Endothelial cell of umbilical vein (primary cell): ENCODE measurements at regions of chr15 and their contacts with region 1.

Region 1: GRCh38 chr15:72685925-72686794 is at the starts of genes BBS4 and HIGD2B:
- DNase-seq: peak; percentile 87
- H3K4me3 ChIP-seq: peak within 1 kb of the TSS; percentile 54 to 79 (median 72)
- H3K27ac ChIP-seq: peak within 1 kb of the TSS; percentile 67
- H3K4me1 ChIP-seq: peaks cover 9% of the 10 kb centered on the region
- H3K27me3 ChIP-seq: no peaks in the 10 kb centered on the region
- CTCF ChIP-seq: no peak
- POLR2A ChIP-seq: peak; percentile 62
- total RNA-seq, gene BBS4: 7.5 and 11.3 TPM in 2 replicates
- total RNA-seq, gene HIGD2B: not detected in 2 replicates

Region 2: DNA sequence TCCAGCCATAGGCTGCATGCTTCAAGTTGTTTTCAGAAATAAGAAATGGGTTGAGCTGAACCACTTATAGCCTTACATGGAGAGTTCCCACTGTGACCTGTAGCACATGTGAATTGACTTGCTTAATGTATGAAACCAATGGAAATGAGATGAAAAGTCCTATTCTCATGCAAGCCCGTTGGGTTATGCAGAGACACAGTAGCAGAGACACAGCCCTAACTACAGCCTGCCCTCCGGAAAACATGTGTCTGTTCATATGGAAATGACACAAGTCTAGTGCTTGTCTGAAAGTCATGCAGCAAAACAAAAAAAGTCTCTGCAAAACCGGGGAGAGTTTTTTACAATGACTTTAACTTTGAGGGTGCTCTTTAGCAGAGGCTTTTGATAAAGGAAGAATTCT is 14.6 kb before region 1 on chr15:
- CTCF ChIA-PET with region 1: interaction called, 11 read pairs
- POLR2A ChIA-PET with region 1: no interaction called
- dilution Hi-C with region 1: no loop called
- intact Hi-C with region 1: no loop called
- DNase-seq: no peak
- H3K4me3 ChIP-seq: no peak overlapping the region
- H3K27ac ChIP-seq: no peak overlapping the region
- H3K4me1 ChIP-seq: no peaks in the 10 kb centered on the region
- H3K27me3 ChIP-seq: peaks cover 2 to 14% of the 10 kb centered on the region in 2 experiments
- CTCF ChIP-seq: no peak
- POLR2A ChIP-seq: no peak

Region 3: DNA sequence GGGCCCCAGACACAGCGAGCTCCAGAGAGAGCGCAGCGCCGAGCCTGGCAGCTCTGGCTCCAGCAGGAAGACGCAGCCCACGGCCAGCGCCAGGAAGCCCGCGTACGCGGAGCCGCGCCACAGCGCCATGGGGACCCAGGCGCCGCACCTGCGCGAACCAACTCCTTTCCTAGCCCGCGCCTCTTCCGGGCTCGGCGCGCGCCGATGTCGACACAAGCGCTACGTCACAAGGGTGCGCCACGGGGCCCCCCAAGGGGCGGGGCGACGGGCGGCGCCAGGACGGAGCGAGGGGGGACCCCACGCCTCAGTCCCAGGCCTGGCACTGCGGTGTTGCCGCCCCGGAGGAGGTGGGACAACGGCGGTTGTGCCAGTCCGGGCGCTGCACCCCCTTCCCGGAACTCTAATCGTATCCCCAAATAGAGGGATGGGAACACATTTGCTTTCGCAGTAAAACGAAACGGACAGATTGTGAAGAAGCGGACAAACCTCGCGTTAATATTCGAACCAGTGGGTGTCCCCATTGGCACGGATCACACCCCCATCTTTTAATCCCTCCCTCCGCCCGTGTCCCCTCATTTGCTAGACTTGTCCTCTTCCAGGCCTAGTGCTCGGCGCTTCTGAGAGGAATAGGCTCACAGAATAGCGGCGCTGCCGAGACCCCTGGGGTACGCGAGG is 97.5 kb after region 1 on chr15 and contains the start of gene ADPGK:
- CTCF ChIA-PET with region 1: interaction called, 3 read pairs
- POLR2A ChIA-PET with region 1: no interaction called
- dilution Hi-C with region 1: no loop called
- intact Hi-C with region 1: loop called (anchors 5 kb)
- DNase-seq: peak; percentile 94
- H3K4me3 ChIP-seq: peak within 1 kb of the TSS; percentile 49 to 91 (median 61)
- H3K27ac ChIP-seq: peak within 1 kb of the TSS; percentile 61
- H3K4me1 ChIP-seq: peaks cover 10% of the 10 kb centered on the region
- H3K27me3 ChIP-seq: peaks cover 14 to 18% of the 10 kb centered on the region in 2 experiments
- CTCF ChIP-seq: no peak
- POLR2A ChIP-seq: peak; percentile 92
- total RNA-seq, gene ADPGK: 51.0 and 51.7 TPM in 2 replicates